Naive thymus-derived CD4-positive, alpha-beta T cell (primary cell): ENCODE measurements at regions of chr4 and their contacts with region 1.

Region 1: GRCh38 chr4:183444214-183445066 is at the start of gene CDKN2AIP:
- DNase-seq: peak; percentile 92 to 97 (median 95)
- ATAC-seq: peak; percentile 93
- H3K4me3 ChIP-seq: peak within 1 kb of the TSS; percentile 81
- H3K4me3 Mint-ChIP-seq: peak within 1 kb of the TSS; percentile 94 to 99 (median 97)
- H3K27ac ChIP-seq: peak within 1 kb of the TSS; percentile 96
- H3K27ac Mint-ChIP-seq: peak within 1 kb of the TSS; percentile 97 to 98 (median 98)
- H3K4me1 ChIP-seq: peaks cover 30 to 33% of the 10 kb centered on the region in 2 donors
- H3K4me1 Mint-ChIP-seq: peaks cover 35 to 66% (median 51%) of the 10 kb centered on the region in 7 donors
- H3K27me3 ChIP-seq: no peaks in the 10 kb centered on the region
- H3K27me3 Mint-ChIP-seq: peaks cover 0 to 5% (median 0%) of the 10 kb centered on the region in 5 donors
- total RNA-seq, gene CDKN2AIP: 24.9 to 58.2 (median 44.4) TPM

Region 2: DNA sequence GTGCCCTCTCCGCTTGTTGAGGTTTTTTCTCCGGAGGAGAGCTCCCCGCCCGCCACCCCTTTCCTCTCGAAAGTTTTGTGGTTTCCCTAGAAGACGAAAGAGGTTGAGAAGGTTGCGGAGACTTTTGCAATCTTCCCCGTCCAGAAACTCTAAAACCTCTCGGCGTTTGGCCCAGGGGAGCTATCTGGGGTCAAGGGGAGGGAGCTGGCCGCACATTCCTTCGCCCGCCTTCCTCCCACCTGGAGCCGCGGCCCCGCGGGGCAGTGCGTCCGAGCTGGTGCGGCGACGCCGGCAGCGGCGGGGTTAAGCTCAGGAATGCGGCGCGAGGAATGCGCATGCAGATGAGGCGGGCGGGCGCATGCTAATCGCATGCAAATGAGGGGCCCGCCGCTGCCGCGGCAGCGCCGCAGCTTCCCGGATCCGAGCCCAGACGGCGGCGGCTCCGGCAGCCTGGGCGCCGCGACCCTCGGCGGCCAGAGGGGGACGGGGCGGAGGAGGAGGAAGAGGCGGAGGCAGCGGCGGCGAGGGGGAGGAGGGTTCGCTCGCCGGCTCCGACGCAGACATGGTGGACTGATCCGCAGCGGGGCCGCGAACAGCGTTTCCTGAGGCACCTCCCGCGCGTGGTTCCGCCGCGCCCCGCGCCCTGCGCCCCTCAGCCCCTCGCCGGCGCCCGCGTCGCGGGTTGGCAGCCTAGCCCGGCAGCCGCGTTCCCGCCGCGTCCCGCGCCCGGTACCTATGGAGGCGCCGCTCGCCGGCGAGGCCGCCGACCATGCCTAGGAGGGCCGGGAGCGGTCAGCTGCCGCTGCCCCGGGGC is 345.5 kb before region 1 on chr4 and contains the start of gene WWC2:
- CTCF ChIA-PET with region 1: no interaction called
- POLR2A ChIA-PET with region 1: interaction called, 5 read pairs
- intact Hi-C with region 1: loop called in 1 of 2 experiments (anchors 1 kb)
- DNase-seq: peak; percentile 40 to 68 (median 62)
- ATAC-seq: peak; percentile 85
- H3K4me3 ChIP-seq: peak within 1 kb of the TSS; percentile 75
- H3K4me3 Mint-ChIP-seq: peak within 1 kb of the TSS; percentile 51 to 87 (median 83)
- H3K27ac ChIP-seq: peak within 1 kb of the TSS; percentile 48
- H3K27ac Mint-ChIP-seq: peak within 1 kb of the TSS in 3 of 9 donors; percentile 56 to 72 (median 68)
- H3K4me1 ChIP-seq: peaks cover 0 to 4% of the 10 kb centered on the region in 2 donors
- H3K4me1 Mint-ChIP-seq: peaks cover 3 to 53% (median 34%) of the 10 kb centered on the region in 7 donors
- H3K27me3 ChIP-seq: peaks cover 0 to 2% of the 10 kb centered on the region in 2 donors
- H3K27me3 Mint-ChIP-seq: peaks cover 0 to 61% (median 0%) of the 10 kb centered on the region in 5 donors
- total RNA-seq, gene WWC2: 0.07 to 13.8 (median 10.9) TPM

Region 3: DNA sequence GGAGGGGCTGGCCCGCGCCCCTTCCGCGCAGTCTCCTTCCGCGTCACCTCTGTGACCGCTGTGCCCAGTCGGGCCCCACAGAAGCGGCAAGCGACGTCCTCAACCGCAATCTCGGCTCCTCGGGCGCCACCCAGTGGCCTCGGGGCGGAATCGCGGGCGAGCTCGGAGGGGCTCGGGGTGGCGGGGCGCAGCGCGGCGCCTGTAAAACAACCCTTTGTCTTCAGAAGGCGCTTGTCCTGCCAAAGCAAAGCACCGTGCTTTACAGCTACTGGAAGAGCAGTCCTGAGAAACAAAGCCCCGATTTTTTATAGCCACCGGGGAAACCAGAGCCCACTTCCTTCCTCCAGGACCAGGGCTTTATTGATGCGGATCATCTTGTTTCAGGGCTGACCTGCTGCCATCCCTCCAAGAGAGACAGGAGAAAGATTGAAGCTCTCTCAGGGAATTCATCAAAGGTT is 37.3 kb before region 1 on chr4:
- CTCF ChIA-PET with region 1: interaction called, 3 read pairs
- POLR2A ChIA-PET with region 1: interaction called, 31 read pairs
- intact Hi-C with region 1: loop called (anchors 1 kb)
- DNase-seq: peak; percentile 83 to 96 (median 90)
- ATAC-seq: peak; percentile 99
- H3K4me3 ChIP-seq: peak overlapping the region; percentile 78
- H3K4me3 Mint-ChIP-seq: peak overlapping the region; percentile 60 to 88 (median 85)
- H3K27ac ChIP-seq: peak overlapping the region; percentile 72
- H3K27ac Mint-ChIP-seq: peak overlapping the region; percentile 80 to 95 (median 87)
- H3K4me1 ChIP-seq: no peaks in the 10 kb centered on the region
- H3K4me1 Mint-ChIP-seq: peaks cover 5 to 30% (median 17%) of the 10 kb centered on the region in 7 donors
- H3K27me3 ChIP-seq: no peaks in the 10 kb centered on the region
- H3K27me3 Mint-ChIP-seq: peaks cover 0 to 11% (median 0%) of the 10 kb centered on the region in 5 donors

Region 4: GRCh38 chr4:183455431-183456195 is 11.2 kb after region 1 on chr4:
- CTCF ChIA-PET with region 1: no interaction called
- POLR2A ChIA-PET with region 1: interaction called, 29 read pairs
- intact Hi-C with region 1: loop called in 1 of 2 experiments (anchors 1 kb)
- DNase-seq: peak in 2 of 9 donors; percentile 7 to 10
- ATAC-seq: no peak
- H3K4me3 ChIP-seq: no peak overlapping the region
- H3K4me3 Mint-ChIP-seq: peak overlapping the region in 7 of 10 donors; percentile 6 to 52 (median 25)
- H3K27ac ChIP-seq: no peak overlapping the region
- H3K27ac Mint-ChIP-seq: peak overlapping the region in 7 of 9 donors; percentile 28 to 73 (median 47)
- H3K4me1 ChIP-seq: peaks cover 0 to 12% of the 10 kb centered on the region in 2 donors
- H3K4me1 Mint-ChIP-seq: peaks cover 8 to 25% (median 21%) of the 10 kb centered on the region in 7 donors
- H3K27me3 ChIP-seq: no peaks in the 10 kb centered on the region
- H3K27me3 Mint-ChIP-seq: no peaks in the 10 kb centered on the region

Region 5: DNA sequence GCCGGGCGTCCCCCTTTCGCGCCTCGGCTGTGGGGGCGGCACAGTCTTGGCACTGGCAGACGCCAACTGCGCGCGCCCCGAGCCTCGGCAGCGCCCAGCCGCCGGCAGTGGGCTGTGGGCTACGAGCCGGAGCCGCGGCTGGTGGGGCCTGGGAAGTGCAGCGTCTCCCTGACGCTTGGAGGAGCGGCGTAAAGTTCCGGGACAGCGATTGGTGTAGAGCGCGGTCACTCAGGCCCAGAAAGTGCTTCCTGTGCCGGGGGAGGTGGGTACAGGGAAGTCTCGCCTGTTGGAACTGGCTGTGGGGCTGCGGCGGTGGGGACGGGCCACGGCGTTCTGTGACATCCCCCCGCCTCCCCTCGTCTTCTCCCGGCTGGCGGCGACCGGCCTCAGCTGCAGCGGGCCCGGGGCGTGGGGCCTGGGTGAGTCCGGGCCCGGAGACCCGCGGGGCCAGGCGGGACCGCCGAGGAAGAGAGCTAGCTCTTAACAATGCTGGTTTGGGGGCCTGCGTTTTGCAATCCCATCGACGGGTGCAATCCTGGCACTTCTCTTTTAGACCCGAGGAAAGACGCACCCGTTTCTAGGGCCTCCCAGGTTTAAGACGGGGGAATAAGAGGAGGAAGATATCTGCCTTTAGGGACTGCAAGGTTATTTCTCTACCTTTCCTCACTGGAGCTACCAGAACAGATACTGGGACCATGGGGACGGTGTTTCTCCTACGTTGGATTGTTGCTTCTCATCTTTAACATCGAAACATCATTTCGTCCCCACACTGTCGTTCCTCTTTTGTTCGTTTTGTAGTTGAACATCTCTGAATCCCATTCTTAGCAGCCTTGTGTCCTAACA is 214.8 kb after region 1 on chr4 and contains the starts of genes RWDD4 and TRAPPC11:
- CTCF ChIA-PET with region 1: no interaction called
- POLR2A ChIA-PET with region 1: interaction called, 16 read pairs
- intact Hi-C with region 1: loop called (anchors 1 kb)
- DNase-seq: peak; percentile 83 to 97 (median 95)
- ATAC-seq: peak; percentile 99
- H3K4me3 ChIP-seq: peak within 1 kb of the TSS; percentile 87
- H3K4me3 Mint-ChIP-seq: peak within 1 kb of the TSS; percentile 91 to 98 (median 96)
- H3K27ac ChIP-seq: peak within 1 kb of the TSS; percentile 96
- H3K27ac Mint-ChIP-seq: peak within 1 kb of the TSS; percentile 90 to 99 (median 95)
- H3K4me1 ChIP-seq: peaks cover 14 to 19% of the 10 kb centered on the region in 2 donors
- H3K4me1 Mint-ChIP-seq: peaks cover 35 to 48% (median 38%) of the 10 kb centered on the region in 7 donors
- H3K27me3 ChIP-seq: no peaks in the 10 kb centered on the region
- H3K27me3 Mint-ChIP-seq: no peaks in the 10 kb centered on the region
- total RNA-seq, gene RWDD4: 9.3 to 15.8 (median 11.6) TPM
- total RNA-seq, gene TRAPPC11: 26.3 to 48.8 (median 35.6) TPM

Region 6: DNA sequence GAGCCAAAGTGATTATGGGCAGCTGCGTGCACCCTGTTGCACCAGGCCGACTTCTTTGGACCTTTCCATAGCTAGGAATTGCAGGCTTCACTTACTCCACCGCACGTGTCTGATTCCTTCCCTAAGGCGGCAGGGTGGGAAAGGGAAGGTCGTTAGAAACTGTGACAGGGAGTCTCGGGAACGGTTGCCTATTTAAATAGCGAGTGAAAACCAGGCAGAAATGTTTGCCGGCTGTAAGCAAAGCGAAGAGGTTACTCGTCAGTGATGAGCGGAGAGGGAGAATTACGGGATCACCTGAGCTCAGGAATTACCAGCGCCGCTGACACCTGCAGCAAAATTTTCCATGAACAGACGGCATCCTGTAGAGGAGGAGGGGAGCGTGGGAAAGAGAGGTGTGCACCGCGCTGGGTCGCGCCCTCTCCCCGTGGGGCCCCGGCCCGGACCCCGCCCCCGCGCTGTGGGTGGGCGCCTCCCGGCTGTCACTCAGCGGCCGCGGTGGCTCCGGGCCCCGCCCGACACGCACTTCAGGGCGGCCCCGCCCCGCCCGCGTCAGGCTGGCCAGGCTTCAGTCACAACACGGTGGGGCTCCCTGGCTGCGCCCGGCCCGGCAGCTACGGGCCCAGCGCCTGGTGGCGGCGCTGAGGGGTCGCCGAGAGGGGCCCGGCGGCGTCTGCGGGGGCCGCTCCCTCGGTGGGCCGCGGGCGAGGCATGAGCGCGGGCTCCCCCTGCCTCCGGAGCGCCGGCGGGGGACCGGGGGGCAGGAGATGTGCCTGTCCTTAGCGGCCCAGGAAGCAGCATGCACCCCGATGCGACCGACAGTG is 1764.8 kb after region 1 on chr4 and contains the start of gene SNX25:
- CTCF ChIA-PET with region 1: no interaction called
- POLR2A ChIA-PET with region 1: interaction called, 3 read pairs
- intact Hi-C with region 1: loop called (anchors 1 to 2 kb)
- DNase-seq: peak; percentile 77 to 93 (median 83)
- ATAC-seq: peak; percentile 96
- H3K4me3 ChIP-seq: peak within 1 kb of the TSS; percentile 81
- H3K4me3 Mint-ChIP-seq: peak within 1 kb of the TSS; percentile 87 to 95 (median 93)
- H3K27ac ChIP-seq: peak within 1 kb of the TSS; percentile 39
- H3K27ac Mint-ChIP-seq: peak within 1 kb of the TSS; percentile 82 to 93 (median 91)
- H3K4me1 ChIP-seq: peaks cover 27 to 28% of the 10 kb centered on the region in 2 donors
- H3K4me1 Mint-ChIP-seq: peaks cover 31 to 56% (median 47%) of the 10 kb centered on the region in 7 donors
- H3K27me3 ChIP-seq: no peaks in the 10 kb centered on the region
- H3K27me3 Mint-ChIP-seq: peaks cover 0 to 15% (median 0%) of the 10 kb centered on the region in 5 donors
- total RNA-seq, gene SNX25: 8.0 to 18.9 (median 14.3) TPM